Activated CD4-positive, alpha-beta memory T cell treated with anti-CD3 and anti-CD28 coated beads for 36 hours (primary cell): ENCODE measurements at regions of chr19 and their contacts with region 1.

Region 1: GRCh38 chr19:10835754-10836477 is at the start of gene TMED1:
- DNase-seq: peak; percentile 98
- H3K4me3 Mint-ChIP-seq: peak within 1 kb of the TSS; percentile 94
- H3K27ac Mint-ChIP-seq: peak within 1 kb of the TSS; percentile 99
- H3K4me1 Mint-ChIP-seq: peaks cover 15% of the 10 kb centered on the region
- H3K27me3 Mint-ChIP-seq: no peaks in the 10 kb centered on the region
- total RNA-seq, gene TMED1: 18.8 to 19.1 TPM

Region 2: GRCh38 chr19:10760273-10760944 is 75.5 kb before region 1 on chr19:
- CTCF ChIA-PET with region 1: no interaction called
- POLR2A ChIA-PET with region 1: no interaction called
- intact Hi-C with region 1: loop called (anchors 1 kb)
- DNase-seq: peak; percentile 71
- H3K4me3 Mint-ChIP-seq: peak overlapping the region; percentile 71
- H3K27ac Mint-ChIP-seq: peak overlapping the region; percentile 86
- H3K4me1 Mint-ChIP-seq: peaks cover 83% of the 10 kb centered on the region
- H3K27me3 Mint-ChIP-seq: no peaks in the 10 kb centered on the region

Region 3: GRCh38 chr19:10805065-10805757 is 30.7 kb before region 1 on chr19:
- CTCF ChIA-PET with region 1: no interaction called
- POLR2A ChIA-PET with region 1: no interaction called
- intact Hi-C with region 1: no loop called
- DNase-seq: no peak
- H3K4me3 Mint-ChIP-seq: no peak overlapping the region
- H3K27ac Mint-ChIP-seq: peak overlapping the region; percentile 30
- H3K4me1 Mint-ChIP-seq: peaks cover 15% of the 10 kb centered on the region
- H3K27me3 Mint-ChIP-seq: no peaks in the 10 kb centered on the region

Region 4: DNA sequence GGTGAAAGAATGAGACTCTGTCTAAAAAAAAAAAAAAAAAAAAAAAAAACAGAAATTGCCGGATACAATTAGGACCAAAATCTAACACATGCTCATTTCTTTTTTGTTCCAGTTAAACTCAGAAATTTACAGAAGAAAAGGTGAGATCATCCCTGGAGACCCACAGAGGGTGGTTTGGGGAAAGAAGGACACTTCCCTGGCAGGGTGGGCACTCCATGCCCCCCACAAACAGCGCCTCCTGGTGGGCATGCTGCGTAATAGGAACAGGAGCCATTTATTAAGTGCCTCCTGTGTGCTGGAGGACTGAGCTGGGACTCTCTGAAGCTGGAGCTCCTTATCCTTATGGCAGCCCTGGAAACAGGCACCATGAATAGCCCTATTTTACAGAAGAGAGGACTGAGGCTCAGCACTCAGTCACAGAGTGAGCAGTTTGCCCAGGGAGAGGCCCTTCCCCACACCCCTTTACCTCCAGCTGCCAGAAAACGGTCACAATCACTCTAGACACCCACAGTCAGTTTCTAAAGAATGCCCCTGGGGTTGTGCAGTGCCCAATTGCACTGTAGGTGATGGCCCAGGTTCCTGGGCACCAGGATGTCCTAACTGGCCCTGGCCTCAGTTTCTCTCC is 22.4 kb after region 1 on chr19:
- CTCF ChIA-PET with region 1: interaction called, 49 read pairs
- POLR2A ChIA-PET with region 1: interaction called, 3 read pairs
- intact Hi-C with region 1: no loop called
- DNase-seq: peak; percentile 47
- H3K4me3 Mint-ChIP-seq: no peak overlapping the region
- H3K27ac Mint-ChIP-seq: no peak overlapping the region
- H3K4me1 Mint-ChIP-seq: peaks cover 4% of the 10 kb centered on the region
- H3K27me3 Mint-ChIP-seq: no peaks in the 10 kb centered on the region

Region 5: DNA sequence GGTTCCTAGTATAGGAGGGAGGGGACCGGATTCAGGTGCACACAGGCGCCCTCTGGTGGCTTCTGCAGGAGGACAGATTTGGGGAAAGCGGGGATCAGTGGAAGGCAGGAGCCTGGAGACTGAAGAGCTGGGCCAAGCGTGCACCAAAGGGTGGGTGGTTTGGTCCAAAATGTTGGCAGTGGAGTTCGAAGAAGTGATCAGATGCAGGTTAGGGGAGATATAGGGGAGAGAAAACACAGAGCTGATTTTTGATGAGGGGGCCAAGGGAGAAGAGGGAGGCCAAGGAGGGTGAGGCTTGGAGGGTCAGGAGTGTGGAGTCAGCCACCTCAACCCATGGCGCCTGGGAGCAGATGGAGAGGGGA is 28.6 kb after region 1 on chr19:
- CTCF ChIA-PET with region 1: interaction called, 49 read pairs
- POLR2A ChIA-PET with region 1: interaction called, 6 read pairs
- intact Hi-C with region 1: no loop called
- DNase-seq: peak; percentile 91
- H3K4me3 Mint-ChIP-seq: no peak overlapping the region
- H3K27ac Mint-ChIP-seq: no peak overlapping the region
- H3K4me1 Mint-ChIP-seq: peaks cover 13% of the 10 kb centered on the region
- H3K27me3 Mint-ChIP-seq: no peaks in the 10 kb centered on the region

Region 6: DNA sequence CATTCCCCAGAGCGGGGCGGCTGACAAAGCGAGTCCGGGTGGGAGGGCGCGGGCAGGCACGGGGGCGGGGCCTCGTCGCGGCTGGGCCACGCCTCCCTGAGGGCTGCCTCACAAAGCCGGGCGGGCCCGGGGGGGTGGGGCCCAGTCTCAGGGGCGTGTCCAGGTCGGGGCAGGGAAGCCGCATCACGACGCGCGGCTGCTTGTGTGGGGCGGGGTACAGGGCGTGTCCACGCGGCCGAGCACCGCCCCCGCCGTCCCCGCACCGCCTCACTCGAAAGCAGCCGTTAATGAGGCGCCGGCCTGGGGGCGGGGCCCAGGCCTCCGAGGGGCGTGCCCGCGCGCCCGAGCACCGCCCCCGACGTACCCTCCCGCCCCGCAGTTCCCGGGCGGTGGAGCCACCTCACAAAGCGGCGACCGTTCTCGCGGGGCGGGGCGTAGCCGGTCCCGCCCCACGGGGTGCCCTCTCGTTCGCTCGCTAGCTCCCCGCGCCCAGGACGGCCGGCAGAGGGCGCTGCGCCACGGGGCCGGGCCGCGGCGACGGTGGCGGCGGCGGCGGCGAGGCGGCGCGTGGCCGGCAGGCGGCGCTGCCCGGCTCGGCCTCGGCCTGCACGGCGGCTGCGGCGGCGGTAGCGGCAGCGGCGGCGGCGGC is 35.2 kb after region 1 on chr19 and contains the start of gene CARM1:
- CTCF ChIA-PET with region 1: interaction called, 49 read pairs
- POLR2A ChIA-PET with region 1: interaction called, 3 read pairs
- intact Hi-C with region 1: loop called (anchors 2 kb)
- DNase-seq: peak; percentile 99
- H3K4me3 Mint-ChIP-seq: peak within 1 kb of the TSS; percentile 79
- H3K27ac Mint-ChIP-seq: peak within 1 kb of the TSS; percentile 96
- H3K4me1 Mint-ChIP-seq: peaks cover 25% of the 10 kb centered on the region
- H3K27me3 Mint-ChIP-seq: no peaks in the 10 kb centered on the region
- total RNA-seq, gene CARM1: 75.0 to 78.3 TPM

Region 7: DNA sequence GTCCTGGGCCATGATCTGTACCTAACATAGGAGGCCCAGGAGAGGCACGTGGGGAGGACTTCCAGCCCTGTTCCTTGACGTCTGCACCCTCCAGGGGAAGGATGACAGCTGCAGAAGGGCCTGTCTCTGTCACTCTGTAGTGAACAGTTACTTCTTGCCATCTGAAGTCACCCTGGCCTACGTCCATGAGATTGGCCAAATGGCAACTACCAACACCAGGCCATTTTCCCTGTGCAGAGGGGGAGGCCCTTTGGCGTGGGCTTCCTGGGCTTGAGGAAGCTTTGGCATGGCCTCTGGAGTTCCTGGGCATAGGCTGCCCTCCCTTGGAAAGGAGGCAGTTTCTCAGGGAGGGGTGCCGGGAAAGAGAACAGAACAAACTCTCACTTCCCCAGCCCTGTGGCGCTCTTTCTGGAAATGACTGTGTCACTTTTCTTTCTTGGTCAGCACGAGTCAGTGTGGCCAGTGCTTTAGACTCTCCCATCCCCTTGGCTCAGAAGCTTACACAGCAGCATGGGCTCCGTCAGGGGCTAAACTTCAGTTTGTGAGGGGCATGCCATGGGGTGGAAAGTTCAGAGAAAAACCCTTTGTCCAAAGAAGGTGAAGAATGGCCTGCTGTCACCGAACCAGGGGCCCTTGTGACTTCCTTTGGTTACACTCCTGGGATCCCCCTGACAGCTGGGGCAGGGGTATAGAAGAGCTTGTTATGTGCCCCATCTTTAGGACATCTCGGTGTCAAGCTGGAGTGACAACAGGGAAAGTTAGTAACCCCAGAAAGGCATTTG is 40.7 kb after region 1 on chr19:
- CTCF ChIA-PET with region 1: no interaction called
- POLR2A ChIA-PET with region 1: no interaction called
- intact Hi-C with region 1: loop called (anchors 1 kb)
- DNase-seq: peak; percentile 40
- H3K4me3 Mint-ChIP-seq: no peak overlapping the region
- H3K27ac Mint-ChIP-seq: peak overlapping the region; percentile 52
- H3K4me1 Mint-ChIP-seq: peaks cover 38% of the 10 kb centered on the region
- H3K27me3 Mint-ChIP-seq: no peaks in the 10 kb centered on the region

Region 8: GRCh38 chr19:11090054-11090900 is 254.4 kb after region 1 on chr19:
- CTCF ChIA-PET with region 1: no interaction called
- POLR2A ChIA-PET with region 1: no interaction called
- intact Hi-C with region 1: loop called (anchors 1 kb)
- DNase-seq: peak; percentile 99
- H3K4me3 Mint-ChIP-seq: peak overlapping the region; percentile 95
- H3K27ac Mint-ChIP-seq: peak overlapping the region; percentile 98
- H3K4me1 Mint-ChIP-seq: peaks cover 45% of the 10 kb centered on the region
- H3K27me3 Mint-ChIP-seq: no peaks in the 10 kb centered on the region